Activated B cell treated with CpG ODN at 0.5 μM for 24 hours (primary cell): ENCODE measurements at regions of chr7 and their contacts with region 1.

Region 1: DNA sequence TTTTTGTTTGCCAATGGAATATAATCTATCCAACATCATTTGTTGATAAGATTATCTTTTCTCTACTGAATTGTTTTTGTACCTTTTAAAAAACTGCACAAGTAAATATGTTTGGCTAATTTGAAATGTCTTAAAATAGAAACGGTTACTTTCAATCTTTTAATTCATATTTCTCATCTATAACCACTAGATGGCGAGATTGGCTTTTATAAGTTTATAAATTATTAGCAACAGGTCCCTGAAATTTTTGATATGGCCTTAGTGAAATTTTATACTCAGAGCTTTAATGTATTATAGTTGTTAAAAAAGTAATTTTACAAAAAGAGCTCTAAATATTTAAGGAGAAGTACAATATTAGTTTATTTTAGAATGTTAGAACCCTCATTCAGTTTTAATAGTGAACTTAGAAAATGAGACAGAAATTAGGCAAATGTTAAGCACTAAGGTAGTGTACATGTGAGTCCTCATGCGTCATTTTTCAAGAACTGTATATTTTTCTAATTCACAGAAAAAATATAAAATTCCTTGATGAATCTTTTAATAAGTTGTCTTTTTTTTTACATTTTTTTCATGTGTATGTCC is 592.5 kb downstream of the ARL4A start:
- DNase-seq: no peak
- ATAC-seq: no peak
- H3K4me3 Mint-ChIP-seq: no peak overlapping the region
- H3K27ac Mint-ChIP-seq: no peak overlapping the region
- H3K4me1 Mint-ChIP-seq: no peaks in the 10 kb centered on the region
- H3K27me3 Mint-ChIP-seq: no peaks in the 10 kb centered on the region
- CTCF ChIP-seq: peak; percentile 20

Region 2: DNA sequence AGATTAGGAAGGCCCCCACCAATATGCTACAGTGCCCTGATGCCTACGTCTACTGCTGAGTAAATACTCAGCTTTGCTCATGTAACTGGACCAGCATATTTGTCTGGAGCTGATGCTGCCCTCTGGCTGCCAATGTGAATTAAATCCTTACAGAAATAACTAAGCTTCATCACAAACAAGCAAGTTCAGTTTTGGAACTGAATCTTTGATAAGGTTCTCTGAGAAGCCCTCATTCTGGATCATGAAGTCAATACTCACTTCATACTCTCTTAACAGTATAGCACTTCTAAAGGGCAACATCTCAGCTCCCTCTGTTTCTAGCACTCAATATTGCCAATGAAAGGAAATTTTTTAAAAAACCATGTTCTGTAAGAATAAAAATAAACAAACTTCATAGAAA is 462.9 kb after region 1 on chr7:
- CTCF ChIA-PET with region 1: no interaction called
- POLR2A ChIA-PET with region 1: no interaction called
- intact Hi-C with region 1: loop called (anchors 10 kb)
- DNase-seq: no peak
- ATAC-seq: no peak
- H3K4me3 Mint-ChIP-seq: no peak overlapping the region
- H3K27ac Mint-ChIP-seq: no peak overlapping the region
- H3K4me1 Mint-ChIP-seq: no peaks in the 10 kb centered on the region
- H3K27me3 Mint-ChIP-seq: no peaks in the 10 kb centered on the region
- CTCF ChIP-seq: no peak

Region 3: GRCh38 chr7:14457568-14458453 is 1177.9 kb after region 1 on chr7:
- CTCF ChIA-PET with region 1: interaction called, 6 read pairs
- POLR2A ChIA-PET with region 1: no interaction called
- intact Hi-C with region 1: loop called (anchors 1 kb)
- DNase-seq: no peak
- ATAC-seq: no peak
- H3K4me3 Mint-ChIP-seq: no peak overlapping the region
- H3K27ac Mint-ChIP-seq: no peak overlapping the region
- H3K4me1 Mint-ChIP-seq: no peaks in the 10 kb centered on the region
- H3K27me3 Mint-ChIP-seq: no peaks in the 10 kb centered on the region
- CTCF ChIP-seq: no peak

Region 4: GRCh38 chr7:14691597-14692203 is 1411.8 kb after region 1 on chr7:
- CTCF ChIA-PET with region 1: interaction called, 33 read pairs
- POLR2A ChIA-PET with region 1: no interaction called
- intact Hi-C with region 1: loop called (anchors 1 kb)
- DNase-seq: no peak
- ATAC-seq: peak; percentile 64
- H3K4me3 Mint-ChIP-seq: no peak overlapping the region
- H3K27ac Mint-ChIP-seq: no peak overlapping the region
- H3K4me1 Mint-ChIP-seq: no peaks in the 10 kb centered on the region
- H3K27me3 Mint-ChIP-seq: no peaks in the 10 kb centered on the region
- CTCF ChIP-seq: peak; percentile 53